ENCODE measurements at regions of chr16 and their contacts with region 1.

Region 1: GRCh38 chr16:81873843-81874752 is 95.0 kb downstream of the PLCG2 start:
- DNase-seq: peak; percentile 35 to 65
- ATAC-seq: peak in 6 of 8 donors; percentile 57 to 79 (median 68)
- H3K4me3 ChIP-seq: no peak overlapping the region
- H3K27ac ChIP-seq: peak overlapping the region in 1 of 10 donors; percentile 41
- H3K4me1 ChIP-seq: peaks cover 0 to 19% (median 4%) of the 10 kb centered on the region in 9 donors
- H3K27me3 ChIP-seq: peaks cover 0 to 4% (median 0%) of the 10 kb centered on the region in 7 donors
- CTCF ChIP-seq: peak; percentile 67 to 91 (median 81)

Region 2: DNA sequence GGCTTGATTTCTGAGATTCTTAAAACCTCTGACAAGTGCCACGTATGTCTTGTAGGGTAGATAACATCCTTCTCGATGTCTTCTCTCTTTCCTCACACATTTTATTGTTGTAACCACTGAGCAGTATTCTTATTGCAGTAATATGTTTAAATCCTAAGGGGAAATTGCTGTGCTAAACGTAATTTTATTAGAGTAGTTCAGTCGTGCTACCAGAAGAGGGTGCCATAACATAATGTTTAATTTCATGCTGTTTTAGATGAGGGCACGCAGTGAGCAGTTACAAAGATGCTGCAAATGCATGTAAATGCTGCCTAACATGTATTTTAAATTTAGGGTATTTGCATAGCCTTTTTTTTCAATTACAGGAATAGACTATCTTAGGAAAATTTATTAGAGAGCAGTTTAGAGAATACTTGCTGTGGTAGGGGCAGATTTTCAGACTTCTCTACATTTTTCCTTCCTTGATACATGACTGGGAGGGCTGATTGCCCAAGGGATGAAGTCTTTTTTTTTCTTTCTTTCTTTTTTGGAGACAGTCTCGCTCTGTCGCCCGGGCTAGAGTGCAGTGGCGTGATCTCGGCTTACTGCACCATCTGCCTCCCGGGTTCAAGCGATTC is 507.7 kb before region 1 on chr16:
- intact Hi-C with region 1: loop called in 4 of 10 experiments (anchors 5 to 10 kb)
- DNase-seq: no peak
- ATAC-seq: peak in 7 of 8 donors; percentile 44 to 68 (median 65)
- H3K4me3 ChIP-seq: no peak overlapping the region
- H3K27ac ChIP-seq: peak overlapping the region in 1 of 10 donors; percentile 87
- H3K4me1 ChIP-seq: peaks cover 0 to 40% (median 12%) of the 10 kb centered on the region in 9 donors
- H3K27me3 ChIP-seq: no peaks in the 10 kb centered on the region
- CTCF ChIP-seq: peak; percentile 43 to 82 (median 70)

Region 3: DNA sequence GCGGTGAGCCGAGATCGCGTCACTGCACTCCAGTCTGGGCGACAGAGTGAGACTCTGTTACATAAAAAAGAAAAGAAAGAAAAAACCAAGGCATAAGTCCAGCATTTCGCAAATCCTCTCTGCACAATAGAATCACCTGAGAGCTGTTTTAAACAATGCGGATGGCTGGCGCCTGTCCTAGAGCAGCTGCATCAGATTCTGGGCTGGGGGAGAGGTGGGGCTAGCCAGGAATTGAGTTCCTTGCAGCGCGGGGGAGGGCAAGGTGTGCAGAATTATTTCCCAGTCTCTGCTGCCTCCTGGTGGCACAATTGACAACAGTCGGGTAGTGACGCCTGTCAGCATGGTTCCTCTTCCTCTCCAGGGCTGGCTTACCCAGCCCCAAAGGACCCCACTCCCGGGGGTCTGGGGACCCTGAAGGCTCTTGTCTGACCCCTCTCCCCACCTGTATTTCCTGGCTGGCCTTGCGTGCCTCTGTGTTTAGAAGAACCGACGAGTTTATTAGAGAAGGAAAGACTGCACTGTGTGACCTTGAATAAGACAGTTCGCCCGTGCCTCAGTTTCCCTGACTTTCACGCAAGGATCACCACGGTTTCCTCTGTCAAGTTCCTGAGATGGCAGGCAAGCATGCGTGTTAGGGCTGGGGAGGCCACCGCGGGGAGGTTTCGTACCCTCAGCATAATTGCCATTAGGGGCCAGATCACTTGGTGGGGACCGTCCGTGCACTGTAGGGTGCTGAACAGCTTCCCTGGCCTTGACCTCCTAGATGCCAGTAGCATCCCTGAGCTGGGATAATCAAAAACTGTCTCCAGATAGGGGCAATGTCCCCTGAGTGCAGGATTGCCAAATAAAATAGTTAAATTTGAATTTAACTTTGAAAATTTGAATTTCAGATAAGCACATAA is 136.0 kb before region 1 on chr16:
- intact Hi-C with region 1: loop called in 1 of 10 experiments (anchors 5 kb)
- DNase-seq: peak; percentile 68 to 89
- ATAC-seq: peak; percentile 87 to 97 (median 94)
- H3K4me3 ChIP-seq: peak overlapping the region in 7 of 10 donors; percentile 12 to 43 (median 32)
- H3K27ac ChIP-seq: peak overlapping the region in 5 of 10 donors; percentile 25 to 79 (median 61)
- H3K4me1 ChIP-seq: peaks cover 0 to 24% (median 9%) of the 10 kb centered on the region in 9 donors
- H3K27me3 ChIP-seq: peaks cover 0 to 9% (median 0%) of the 10 kb centered on the region in 7 donors
- CTCF ChIP-seq: peak; percentile 61 to 91 (median 85)

Region 4: DNA sequence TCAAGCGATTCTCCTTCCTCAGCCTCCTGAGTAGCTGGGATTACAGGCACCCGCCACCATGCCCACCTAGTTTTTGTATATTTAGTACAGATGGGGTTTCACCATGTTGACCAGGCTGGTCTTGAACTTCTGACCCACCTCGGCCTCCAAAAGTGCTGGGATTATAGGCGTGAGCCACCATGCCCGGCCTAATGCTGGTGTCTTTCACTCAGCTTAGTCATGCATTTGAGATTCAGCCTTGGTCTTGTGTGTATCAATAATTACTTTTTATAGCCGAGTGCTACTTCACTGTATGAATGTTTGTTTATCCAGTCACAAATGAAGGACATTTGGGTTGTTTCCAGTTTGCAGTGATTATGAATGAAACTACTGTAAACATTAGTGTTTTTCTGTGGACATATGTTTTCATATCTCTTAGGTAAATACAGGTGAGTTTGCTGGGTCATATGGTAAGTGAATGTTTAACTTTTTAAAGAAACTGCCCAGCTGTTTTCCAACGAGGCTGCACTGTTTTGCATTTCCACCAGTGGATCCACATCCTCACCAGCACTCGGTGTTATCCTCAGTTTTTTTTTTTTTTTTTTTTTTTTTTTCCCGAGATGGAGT is 106.0 kb before region 1 on chr16:
- intact Hi-C with region 1: loop called in 2 of 10 experiments (anchors 5 to 10 kb)
- DNase-seq: no peak
- ATAC-seq: no peak
- H3K4me3 ChIP-seq: no peak overlapping the region
- H3K27ac ChIP-seq: no peak overlapping the region
- H3K4me1 ChIP-seq: peaks cover 0 to 9% (median 0%) of the 10 kb centered on the region in 9 donors
- H3K27me3 ChIP-seq: peaks cover 0 to 7% (median 3%) of the 10 kb centered on the region in 7 donors
- CTCF ChIP-seq: no peak

Region 5: DNA sequence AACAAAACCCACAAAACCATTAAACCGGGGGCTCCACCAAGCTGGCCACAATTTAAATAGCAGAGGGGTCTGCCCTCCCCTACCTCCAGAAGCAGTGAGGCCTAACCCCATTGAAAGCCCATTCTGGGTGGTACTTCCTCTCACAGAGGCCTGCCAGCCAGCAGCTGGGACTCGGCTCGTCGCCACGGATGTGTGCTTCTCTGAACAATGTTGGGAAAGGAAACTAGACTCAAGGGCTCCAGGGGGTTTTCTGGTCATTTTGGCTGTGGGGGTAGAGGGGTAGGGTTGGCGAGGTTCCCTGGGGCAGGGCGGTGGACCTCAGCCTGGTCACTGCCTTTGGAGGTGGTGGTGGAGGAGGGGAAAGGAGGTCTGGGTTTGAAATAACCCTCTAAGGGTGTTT is 99.8 kb before region 1 on chr16:
- intact Hi-C with region 1: loop called in 2 of 10 experiments (anchors 5 to 10 kb)
- DNase-seq: peak; percentile 33 to 72
- ATAC-seq: peak; percentile 11 to 87 (median 68)
- H3K4me3 ChIP-seq: no peak overlapping the region
- H3K27ac ChIP-seq: peak overlapping the region in 9 of 10 donors; percentile 6 to 79 (median 50)
- H3K4me1 ChIP-seq: peaks cover 0 to 39% (median 13%) of the 10 kb centered on the region in 9 donors
- H3K27me3 ChIP-seq: peaks cover 0 to 12% (median 1%) of the 10 kb centered on the region in 7 donors
- CTCF ChIP-seq: no peak

Region 6: DNA sequence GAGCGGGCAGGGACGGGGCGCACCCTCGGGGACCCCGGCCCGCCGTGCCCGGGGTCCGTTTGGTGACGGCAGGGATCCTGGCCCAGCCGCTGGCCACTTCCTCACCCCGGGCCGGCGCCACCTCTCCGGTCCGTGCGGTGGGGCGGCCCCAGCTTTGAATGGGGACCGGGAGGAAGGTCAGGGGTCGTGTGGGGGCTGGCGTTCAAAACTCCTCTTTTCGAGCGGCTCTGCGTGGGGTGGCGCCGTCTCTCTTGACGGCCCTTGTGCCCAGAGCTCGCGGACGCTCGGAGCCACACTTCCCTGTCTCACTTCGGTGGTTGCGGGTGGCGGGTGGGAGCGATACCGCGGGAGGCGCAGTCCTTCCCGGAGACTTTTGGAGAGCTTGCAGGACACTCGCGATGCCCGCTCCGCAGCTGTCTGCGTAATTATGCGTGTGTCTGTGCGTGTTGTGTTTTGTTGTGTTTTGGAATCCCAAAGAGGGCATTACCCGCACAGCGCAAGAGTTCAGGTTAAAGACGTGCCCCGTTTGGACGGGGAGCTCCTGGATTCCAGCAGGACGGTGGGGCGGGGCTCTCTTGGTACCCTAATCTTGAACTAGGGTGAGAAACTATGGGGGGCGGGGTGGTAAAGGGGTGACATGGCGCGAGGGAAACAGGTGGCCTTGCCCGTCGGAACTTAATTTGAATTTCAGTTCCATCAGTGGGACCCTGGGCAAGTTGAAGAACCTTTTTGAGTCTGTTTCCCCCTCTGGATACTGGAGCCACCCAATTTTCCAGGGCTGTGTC is 94.4 kb before region 1 on chr16:
- intact Hi-C with region 1: loop called in 3 of 10 experiments (anchors 5 to 10 kb)
- DNase-seq: peak; percentile 23 to 25
- ATAC-seq: peak; percentile 27 to 62 (median 54)
- H3K4me3 ChIP-seq: peak overlapping the region; percentile 50 to 83 (median 71)
- H3K27ac ChIP-seq: peak overlapping the region in 8 of 10 donors; percentile 40 to 91 (median 72)
- H3K4me1 ChIP-seq: peaks cover 0 to 45% (median 11%) of the 10 kb centered on the region in 9 donors
- H3K27me3 ChIP-seq: peaks cover 0 to 21% (median 15%) of the 10 kb centered on the region in 7 donors
- CTCF ChIP-seq: no peak

Measured in heart right ventricle (tissue), 16 donors.